Vagina (tissue), 2 donors: ENCODE measurements at regions of chr16 and their contacts with region 1.

Region 1: DNA sequence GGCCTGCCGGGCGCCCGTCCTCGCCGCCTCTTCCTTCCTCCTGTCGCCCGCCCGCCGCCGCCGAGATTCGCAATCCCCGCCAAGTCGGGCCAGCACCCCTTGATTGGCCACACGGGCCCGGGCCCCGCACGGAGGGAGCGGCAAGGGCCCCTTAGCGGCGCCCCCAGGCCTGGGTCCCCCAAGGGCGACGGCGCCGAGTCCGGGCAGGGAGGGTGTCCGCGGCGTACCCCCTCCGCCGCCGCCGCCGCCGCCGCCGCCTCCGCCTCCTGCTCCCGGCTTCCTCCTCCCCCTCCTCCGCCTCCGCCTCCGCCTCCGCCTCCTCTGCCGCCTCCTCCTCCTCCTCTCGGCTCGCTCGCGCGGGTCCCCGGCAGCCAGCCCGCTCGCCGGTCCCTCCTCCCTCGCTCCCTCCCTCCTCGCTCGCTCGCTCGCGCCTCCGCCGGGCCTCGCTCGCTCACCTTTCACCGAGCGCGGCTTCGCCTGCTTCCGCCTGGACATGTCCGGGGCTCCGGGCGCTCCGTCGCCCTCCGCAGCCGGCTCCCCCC is 561 bp downstream of the ZNF423 start:
- DNase-seq: no peak
- H3K4me3 ChIP-seq: peak overlapping the region; percentile 53 to 92
- H3K27ac ChIP-seq: peak overlapping the region; percentile 87
- H3K4me1 ChIP-seq: peaks cover 36% of the 10 kb centered on the region
- H3K27me3 ChIP-seq: no peaks in the 10 kb centered on the region
- CTCF ChIP-seq: no peak
- POLR2A ChIP-seq: peak in 1 of 2 donors; percentile 79

Region 2: GRCh38 chr16:49491771-49492761 is 363.3 kb before region 1 on chr16:
- intact Hi-C with region 1: loop called (anchors 5 kb)
- DNase-seq: no peak
- H3K4me3 ChIP-seq: peak overlapping the region; percentile 33
- H3K27ac ChIP-seq: no peak overlapping the region
- H3K4me1 ChIP-seq: peaks cover 13% of the 10 kb centered on the region
- H3K27me3 ChIP-seq: no peaks in the 10 kb centered on the region
- CTCF ChIP-seq: peak; percentile 50 to 94 (median 74)
- POLR2A ChIP-seq: no peak

Region 3: DNA sequence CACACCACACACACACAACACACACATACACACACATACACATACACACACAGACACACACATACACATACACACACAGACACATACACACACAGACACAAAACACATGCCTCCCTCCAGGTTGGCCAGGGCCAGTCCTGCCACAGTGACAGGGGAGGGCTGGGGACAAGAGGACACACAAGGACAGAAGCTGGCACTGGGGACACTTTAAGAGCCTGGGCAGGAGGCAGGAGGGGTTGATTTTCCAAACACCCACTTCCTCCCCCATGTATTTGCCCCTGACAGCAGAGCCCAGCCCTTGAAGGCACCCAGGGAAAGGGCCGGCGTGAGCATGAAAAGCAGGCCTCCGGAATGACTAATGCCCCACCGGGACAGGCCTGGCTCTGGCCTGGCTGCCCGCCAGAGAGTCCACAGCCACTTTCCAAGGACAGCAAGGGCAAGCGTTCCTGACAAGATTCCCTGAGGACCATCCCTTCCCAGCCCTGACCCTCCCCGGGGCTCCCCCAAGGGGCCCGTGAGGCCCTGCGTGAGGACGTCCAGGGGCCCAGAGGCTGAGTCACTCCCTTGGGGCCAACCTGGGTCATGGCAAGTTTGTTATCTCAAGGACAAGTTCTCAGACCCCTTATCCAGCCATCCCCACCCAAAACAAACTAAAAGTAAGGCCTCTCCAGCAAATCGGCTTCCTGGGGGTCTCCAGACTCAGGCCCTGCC is 235.0 kb before region 1 on chr16:
- intact Hi-C with region 1: loop called (anchors 10 kb)
- DNase-seq: peak; percentile 77 to 82
- H3K4me3 ChIP-seq: no peak overlapping the region
- H3K27ac ChIP-seq: peak overlapping the region; percentile 81
- H3K4me1 ChIP-seq: peaks cover 24% of the 10 kb centered on the region
- H3K27me3 ChIP-seq: no peaks in the 10 kb centered on the region
- CTCF ChIP-seq: no peak
- POLR2A ChIP-seq: no peak

Region 4: DNA sequence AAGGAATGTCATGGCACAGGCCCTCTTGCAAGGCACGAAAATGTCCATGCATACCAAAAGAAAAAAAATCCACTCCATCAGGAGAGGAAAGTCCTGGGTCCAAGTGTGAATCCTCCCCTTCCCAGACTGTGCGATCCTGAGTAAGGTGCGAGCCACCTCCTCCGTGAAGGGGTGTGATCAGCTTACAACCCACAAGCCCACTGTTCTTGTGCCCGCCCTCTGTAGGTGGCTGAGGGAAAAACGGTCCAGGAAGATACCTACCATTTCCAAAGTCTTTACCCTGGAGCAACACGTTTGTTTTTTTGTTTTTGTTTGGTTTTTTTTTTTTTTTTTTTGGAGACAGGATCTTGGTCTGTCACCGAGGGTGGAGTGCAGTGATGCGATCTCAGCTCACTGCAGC is 116.0 kb before region 1 on chr16:
- intact Hi-C with region 1: loop called (anchors 10 kb)
- DNase-seq: no peak
- H3K4me3 ChIP-seq: no peak overlapping the region
- H3K27ac ChIP-seq: no peak overlapping the region
- H3K4me1 ChIP-seq: no peaks in the 10 kb centered on the region
- H3K27me3 ChIP-seq: no peaks in the 10 kb centered on the region
- CTCF ChIP-seq: no peak
- POLR2A ChIP-seq: no peak

Region 5: GRCh38 chr16:49833085-49833484 is 22.3 kb before region 1 on chr16:
- intact Hi-C with region 1: loop called (anchors 2 kb)
- DNase-seq: no peak
- H3K4me3 ChIP-seq: peak overlapping the region in 1 of 2 donors; percentile 9
- H3K27ac ChIP-seq: peak overlapping the region; percentile 95
- H3K4me1 ChIP-seq: peaks cover 68% of the 10 kb centered on the region
- H3K27me3 ChIP-seq: no peaks in the 10 kb centered on the region
- CTCF ChIP-seq: no peak
- POLR2A ChIP-seq: no peak